Left ventricle myocardium superior (tissue), 1 donor: ENCODE measurements at regions of chr12 and their contacts with region 1.

Region 1: GRCh38 chr12:64256166-64256800 is 34.2 kb upstream of the KICS2 start:
- DNase-seq: no peak
- ATAC-seq: no peak

Region 2: GRCh38 chr12:63838411-63838810 is 417.9 kb before region 1 on chr12:
- intact Hi-C with region 1: loop called (anchors 2 kb)
- DNase-seq: no peak
- ATAC-seq: no peak